Activated CD4-positive, alpha-beta T cell treated with anti-CD3 and anti-CD28 coated beads for 36 hours (primary cell): ENCODE measurements at regions of chr3 and their contacts with region 1.

Region 1: DNA sequence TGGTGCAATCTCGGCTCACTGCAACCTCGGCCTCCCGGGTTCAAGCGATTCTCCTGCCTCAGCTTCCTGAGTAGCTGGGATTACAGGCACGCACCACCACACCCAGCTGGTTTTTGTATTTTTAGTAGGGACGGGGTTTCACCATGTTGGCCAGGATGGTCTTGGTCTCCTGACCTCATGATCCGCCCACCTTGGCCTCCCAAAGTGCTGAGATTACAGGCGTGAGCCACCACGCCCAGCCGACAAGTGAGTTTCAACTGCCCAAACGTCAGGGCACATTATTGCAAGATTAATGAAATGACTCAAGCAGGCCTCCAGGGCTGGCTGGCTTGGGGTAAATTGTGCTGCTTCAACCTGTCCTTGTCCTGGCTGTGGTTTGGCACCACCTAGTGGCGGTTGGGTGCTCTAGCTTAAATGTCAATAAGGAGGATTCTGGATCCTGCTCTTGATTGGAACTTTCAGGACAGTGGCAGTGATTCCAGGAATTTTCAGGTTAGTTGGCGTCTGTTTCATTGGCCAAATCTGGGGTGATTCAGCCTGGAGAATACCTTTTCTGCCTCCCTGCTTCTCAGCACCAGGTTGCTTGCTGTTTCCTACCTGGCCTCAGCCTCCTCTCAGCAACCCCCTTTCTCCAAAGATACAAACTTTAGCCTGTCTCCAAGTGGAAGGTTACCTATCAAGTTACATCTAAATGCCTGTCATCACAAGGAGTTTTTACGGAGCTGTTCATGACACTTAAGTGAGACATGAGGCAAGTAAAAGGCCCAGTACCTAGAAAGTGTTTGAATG is 32.4 kb upstream of the SACM1L start:
- DNase-seq: peak; percentile 94
- ATAC-seq: peak; percentile 93
- H3K4me3 Mint-ChIP-seq: no peak overlapping the region
- H3K27ac Mint-ChIP-seq: no peak overlapping the region
- H3K4me1 Mint-ChIP-seq: peaks cover 16% of the 10 kb centered on the region
- H3K27me3 Mint-ChIP-seq: no peaks in the 10 kb centered on the region

Region 2: DNA sequence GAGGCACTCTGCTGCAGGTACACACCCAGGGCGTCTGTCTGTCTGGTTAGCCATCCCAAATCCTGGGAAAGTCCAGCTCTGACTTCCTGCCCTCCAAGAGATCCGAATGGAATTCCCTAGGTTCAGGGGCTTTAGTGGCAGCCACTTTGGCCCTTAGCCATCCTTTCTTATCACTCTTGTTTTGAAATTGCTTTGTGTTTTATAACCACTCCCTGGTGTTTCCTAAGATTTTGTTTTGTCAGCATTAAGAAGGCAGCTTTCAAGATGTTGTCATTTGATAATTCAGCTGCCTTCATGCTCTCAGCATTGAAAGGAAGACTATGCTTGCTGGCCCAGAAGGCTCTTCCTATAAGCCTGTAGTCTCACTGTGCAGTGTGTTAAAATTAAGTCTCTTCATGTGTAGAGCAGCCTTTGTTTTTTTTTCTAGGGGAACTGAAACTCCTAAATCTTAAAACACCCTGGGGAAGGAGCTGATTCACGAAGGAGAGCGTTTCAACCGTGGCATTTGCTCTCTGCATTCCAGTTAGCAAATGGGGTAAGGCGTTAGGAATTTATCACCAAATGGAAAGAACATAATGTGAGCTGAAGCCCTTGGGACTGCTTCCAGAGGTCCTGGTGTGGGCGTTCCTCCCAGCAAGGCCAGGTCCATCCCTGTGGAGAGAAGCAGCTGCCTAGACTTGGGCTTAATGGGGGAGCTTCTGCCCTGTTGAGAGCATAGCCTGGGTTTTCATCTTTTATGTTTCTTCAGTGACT is 644.8 kb before region 1 on chr3:
- CTCF ChIA-PET with region 1: no interaction called
- POLR2A ChIA-PET with region 1: no interaction called
- intact Hi-C with region 1: no loop called
- DNase-seq: no peak
- ATAC-seq: no peak
- H3K4me3 Mint-ChIP-seq: no peak overlapping the region
- H3K27ac Mint-ChIP-seq: no peak overlapping the region
- H3K4me1 Mint-ChIP-seq: peaks cover 6% of the 10 kb centered on the region
- H3K27me3 Mint-ChIP-seq: no peaks in the 10 kb centered on the region

Region 3: GRCh38 chr3:45507820-45508317 is 148.9 kb before region 1 on chr3:
- CTCF ChIA-PET with region 1: interaction called, 44 read pairs
- POLR2A ChIA-PET with region 1: no interaction called
- intact Hi-C with region 1: loop called (anchors 1 kb)
- DNase-seq: no peak
- ATAC-seq: no peak
- H3K4me3 Mint-ChIP-seq: no peak overlapping the region
- H3K27ac Mint-ChIP-seq: no peak overlapping the region
- H3K4me1 Mint-ChIP-seq: peaks cover 13% of the 10 kb centered on the region
- H3K27me3 Mint-ChIP-seq: no peaks in the 10 kb centered on the region

Region 4: GRCh38 chr3:45546716-45547701 is 109.8 kb before region 1 on chr3:
- CTCF ChIA-PET with region 1: interaction called, 13 read pairs
- POLR2A ChIA-PET with region 1: no interaction called
- intact Hi-C with region 1: no loop called
- DNase-seq: peak; percentile 75
- ATAC-seq: peak; percentile 39
- H3K4me3 Mint-ChIP-seq: no peak overlapping the region
- H3K27ac Mint-ChIP-seq: no peak overlapping the region
- H3K4me1 Mint-ChIP-seq: peaks cover 5% of the 10 kb centered on the region
- H3K27me3 Mint-ChIP-seq: no peaks in the 10 kb centered on the region

Region 5: GRCh38 chr3:45599984-45600650 is 56.7 kb before region 1 on chr3:
- CTCF ChIA-PET with region 1: interaction called, 14 read pairs
- POLR2A ChIA-PET with region 1: no interaction called
- intact Hi-C with region 1: loop called in 1 of 2 experiments (anchors 2 kb)
- DNase-seq: no peak
- ATAC-seq: no peak
- H3K4me3 Mint-ChIP-seq: no peak overlapping the region
- H3K27ac Mint-ChIP-seq: no peak overlapping the region
- H3K4me1 Mint-ChIP-seq: peaks cover 50% of the 10 kb centered on the region
- H3K27me3 Mint-ChIP-seq: no peaks in the 10 kb centered on the region

Region 6: GRCh38 chr3:45670991-45671390 is 14.2 kb after region 1 on chr3:
- CTCF ChIA-PET with region 1: interaction called, 21 read pairs
- POLR2A ChIA-PET with region 1: interaction called, 3 read pairs
- intact Hi-C with region 1: no loop called
- DNase-seq: no peak
- ATAC-seq: no peak
- H3K4me3 Mint-ChIP-seq: no peak overlapping the region
- H3K27ac Mint-ChIP-seq: no peak overlapping the region
- H3K4me1 Mint-ChIP-seq: peaks cover 33% of the 10 kb centered on the region
- H3K27me3 Mint-ChIP-seq: no peaks in the 10 kb centered on the region

Region 7: GRCh38 chr3:45688882-45689756 is 32.4 kb after region 1 on chr3 and contains the start of gene SACM1L:
- CTCF ChIA-PET with region 1: interaction called, 20 read pairs
- POLR2A ChIA-PET with region 1: interaction called, 4 read pairs
- intact Hi-C with region 1: no loop called
- DNase-seq: peak; percentile 98
- ATAC-seq: peak; percentile 85
- H3K4me3 Mint-ChIP-seq: peak within 1 kb of the TSS; percentile 79
- H3K27ac Mint-ChIP-seq: peak within 1 kb of the TSS; percentile 97
- H3K4me1 Mint-ChIP-seq: peaks cover 46% of the 10 kb centered on the region
- H3K27me3 Mint-ChIP-seq: peaks cover 2% of the 10 kb centered on the region
- total RNA-seq, gene SACM1L: 34.2 to 51.8 TPM

Region 8: GRCh38 chr3:45712472-45713110 is 55.8 kb after region 1 on chr3:
- CTCF ChIA-PET with region 1: interaction called, 13 read pairs
- POLR2A ChIA-PET with region 1: interaction called, 5 read pairs
- intact Hi-C with region 1: no loop called
- DNase-seq: no peak
- ATAC-seq: no peak
- H3K4me3 Mint-ChIP-seq: no peak overlapping the region
- H3K27ac Mint-ChIP-seq: peak overlapping the region; percentile 28
- H3K4me1 Mint-ChIP-seq: peaks cover 15% of the 10 kb centered on the region
- H3K27me3 Mint-ChIP-seq: no peaks in the 10 kb centered on the region

Region 9: GRCh38 chr3:45968706-45969105 is 311.9 kb after region 1 on chr3:
- CTCF ChIA-PET with region 1: no interaction called
- POLR2A ChIA-PET with region 1: no interaction called
- intact Hi-C with region 1: no loop called
- DNase-seq: no peak
- ATAC-seq: no peak
- H3K4me3 Mint-ChIP-seq: no peak overlapping the region
- H3K27ac Mint-ChIP-seq: no peak overlapping the region
- H3K4me1 Mint-ChIP-seq: peaks cover 28% of the 10 kb centered on the region
- H3K27me3 Mint-ChIP-seq: no peaks in the 10 kb centered on the region

Region 10: DNA sequence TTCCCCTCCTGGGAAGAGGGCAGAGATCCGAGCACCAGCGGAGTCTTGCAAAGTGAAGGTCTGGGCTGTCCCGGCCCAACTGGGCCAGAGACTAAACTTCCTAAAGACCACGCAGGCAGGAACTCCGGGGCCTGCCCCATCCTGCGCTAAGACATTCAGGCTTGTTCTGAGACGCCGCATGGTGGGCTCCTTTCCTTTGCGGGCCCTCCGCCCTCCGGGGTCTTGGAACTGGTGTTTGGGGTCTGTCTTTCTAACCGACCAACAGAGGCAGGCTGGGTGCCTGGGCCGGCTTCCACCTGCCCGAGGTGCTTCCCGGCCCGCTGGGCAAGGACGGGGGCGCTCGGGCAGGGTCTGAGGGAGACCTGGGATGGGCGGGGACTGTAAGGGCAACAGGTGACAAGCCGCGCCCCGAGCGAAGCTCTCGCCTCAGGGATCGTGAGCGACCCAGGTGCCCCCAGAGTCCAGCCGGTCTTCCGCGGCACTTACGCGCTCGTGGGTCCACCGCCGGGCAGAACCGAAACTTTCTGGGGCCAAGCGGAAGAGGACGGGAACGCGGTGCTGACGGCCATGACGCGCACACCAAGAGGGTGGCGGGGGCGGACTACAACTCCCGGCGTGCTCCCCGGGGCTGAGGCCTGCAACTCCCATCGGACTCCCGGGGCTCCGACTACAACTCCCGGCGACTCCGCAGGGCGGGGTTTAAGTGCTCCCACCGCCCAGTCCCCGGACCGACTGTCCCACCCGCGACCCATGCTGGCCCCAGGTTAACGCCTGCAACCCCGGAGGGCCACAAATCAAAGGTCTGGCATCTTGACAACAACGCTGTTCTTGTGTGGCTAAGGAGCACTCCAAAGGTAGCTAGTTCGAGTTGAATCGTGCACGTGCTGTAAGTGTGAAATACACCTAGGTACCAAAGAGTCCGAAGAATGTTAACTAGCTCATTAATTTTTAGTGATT is 338.7 kb after region 1 on chr3 and contains the start of gene FYCO1:
- CTCF ChIA-PET with region 1: no interaction called
- POLR2A ChIA-PET with region 1: no interaction called
- intact Hi-C with region 1: no loop called
- DNase-seq: peak; percentile 94
- ATAC-seq: peak; percentile 89
- H3K4me3 Mint-ChIP-seq: peak within 1 kb of the TSS; percentile 80
- H3K27ac Mint-ChIP-seq: peak within 1 kb of the TSS; percentile 93
- H3K4me1 Mint-ChIP-seq: peaks cover 43% of the 10 kb centered on the region
- H3K27me3 Mint-ChIP-seq: no peaks in the 10 kb centered on the region
- total RNA-seq, gene FYCO1: 8.2 to 10.6 TPM